IMR-90 (cell line): ENCODE measurements at regions of chr1 and their contacts with region 1.

Region 1: GRCh38 chr1:55204997-55205396 is 10.2 kb downstream of the USP24 start:
- DNase-seq: no peak
- ATAC-seq: peak; percentile 57; the same call in 1 of the 2 replicates
- H3K4me3 ChIP-seq: no peak overlapping the region
- H3K27ac ChIP-seq: no peak overlapping the region
- H3K4me1 ChIP-seq: peaks cover 7% of the 10 kb centered on the region
- H3K27me3 ChIP-seq: no peaks in the 10 kb centered on the region
- CTCF ChIP-seq: no peak
- POLR2A ChIP-seq: no peak
- RAD21 ChIP-seq: no peak

Region 2: GRCh38 chr1:55164906-55165305 is 40.1 kb before region 1 on chr1:
- CTCF ChIA-PET with region 1: interaction called, 4 read pairs
- POLR2A ChIA-PET with region 1: no interaction called
- dilution Hi-C with region 1: no loop called
- in situ Hi-C with region 1: no loop called
- intact Hi-C with region 1: loop called (anchors 5 kb)
- DNase-seq: no peak
- ATAC-seq: no peak
- H3K4me3 ChIP-seq: no peak overlapping the region
- H3K27ac ChIP-seq: no peak overlapping the region
- H3K4me1 ChIP-seq: no peaks in the 10 kb centered on the region; the same call in 1 of the 2 replicates
- H3K27me3 ChIP-seq: no peaks in the 10 kb centered on the region
- CTCF ChIP-seq: no peak
- POLR2A ChIP-seq: no peak
- RAD21 ChIP-seq: no peak

Region 3: GRCh38 chr1:55190109-55190508 is 14.9 kb before region 1 on chr1:
- CTCF ChIA-PET with region 1: no interaction called
- POLR2A ChIA-PET with region 1: no interaction called
- dilution Hi-C with region 1: no loop called
- in situ Hi-C with region 1: no loop called
- intact Hi-C with region 1: no loop called
- DNase-seq: no peak
- ATAC-seq: no peak
- H3K4me3 ChIP-seq: no peak overlapping the region
- H3K27ac ChIP-seq: no peak overlapping the region
- H3K4me1 ChIP-seq: peaks cover 2% of the 10 kb centered on the region; the same call in 1 of the 2 replicates
- H3K27me3 ChIP-seq: no peaks in the 10 kb centered on the region
- CTCF ChIP-seq: no peak
- POLR2A ChIP-seq: no peak
- RAD21 ChIP-seq: no peak